Activated naive CD4-positive, alpha-beta T cell treated with anti-CD3 and anti-CD28 coated beads for 36 hours (primary cell): ENCODE measurements at regions of chr3 and their contacts with region 1.

Region 1: DNA sequence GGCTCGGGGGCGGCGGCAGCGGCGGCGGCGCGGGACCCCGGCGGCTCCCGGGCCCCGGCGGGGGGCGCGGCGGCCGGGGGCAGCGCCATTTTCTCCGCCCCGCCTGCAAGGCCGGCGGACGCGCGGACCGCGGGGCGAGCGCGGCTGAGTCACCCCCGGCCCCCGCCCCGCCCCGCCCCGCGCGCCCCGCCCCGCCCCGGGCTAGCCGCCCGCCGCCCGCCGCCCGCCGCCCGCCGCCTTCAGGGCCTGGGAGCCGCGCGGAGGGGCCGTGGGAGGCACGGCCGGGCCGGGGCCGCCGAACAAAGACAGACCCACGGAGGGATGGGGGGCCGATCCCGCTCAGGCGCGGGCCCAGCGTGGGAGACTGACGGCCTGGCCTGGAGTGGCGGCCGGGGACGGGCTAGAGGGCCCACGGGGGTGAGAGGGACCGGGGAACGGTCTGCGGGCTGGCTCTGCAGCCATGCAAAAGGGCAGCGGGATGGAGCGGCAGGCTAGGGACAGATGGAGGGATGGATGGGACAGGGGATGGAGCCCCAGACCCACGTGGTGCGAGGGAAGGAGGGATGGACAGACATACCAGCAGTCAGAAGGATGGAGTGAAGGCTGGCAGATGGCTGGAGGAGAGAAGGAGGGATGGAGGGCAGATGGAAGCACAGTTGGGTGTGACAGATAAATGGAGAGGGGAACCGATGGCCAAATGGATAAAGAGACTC is at the start of gene EIF4E3:
- DNase-seq: peak; percentile 31
- H3K4me3 Mint-ChIP-seq: peak within 1 kb of the TSS; percentile 90
- H3K27ac Mint-ChIP-seq: peak within 1 kb of the TSS; percentile 91
- H3K4me1 Mint-ChIP-seq: peaks cover 59% of the 10 kb centered on the region
- H3K27me3 Mint-ChIP-seq: no peaks in the 10 kb centered on the region
- total RNA-seq, gene EIF4E3: 25.2 to 26.2 TPM

Region 2: DNA sequence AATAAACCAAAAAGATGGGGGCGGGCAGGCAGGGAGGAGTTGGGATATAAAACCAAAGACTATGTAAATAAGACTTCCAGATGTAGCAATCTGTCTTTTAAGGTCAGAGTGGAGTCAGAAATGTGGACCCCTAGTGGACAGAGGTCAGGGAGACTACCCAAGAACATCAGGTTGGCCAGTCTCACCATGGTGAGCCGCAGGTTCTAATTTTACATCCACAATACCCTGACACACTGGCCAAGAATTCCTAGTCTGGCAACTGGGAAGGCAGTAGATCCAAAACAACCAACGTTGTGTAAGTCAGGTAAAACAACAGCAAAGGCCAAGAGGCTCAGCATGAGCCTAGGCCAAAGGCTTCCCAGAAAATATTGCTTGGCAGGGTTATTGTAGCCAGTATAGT is 345.3 kb before region 1 on chr3:
- CTCF ChIA-PET with region 1: no interaction called
- intact Hi-C with region 1: loop called (anchors 5 kb)
- DNase-seq: no peak
- H3K4me3 Mint-ChIP-seq: no peak overlapping the region
- H3K27ac Mint-ChIP-seq: peak overlapping the region; percentile 69
- H3K4me1 Mint-ChIP-seq: peaks cover 88% of the 10 kb centered on the region
- H3K27me3 Mint-ChIP-seq: no peaks in the 10 kb centered on the region

Region 3: GRCh38 chr3:71520161-71521020 is 205.0 kb before region 1 on chr3:
- CTCF ChIA-PET with region 1: no interaction called
- intact Hi-C with region 1: no loop called
- DNase-seq: no peak
- H3K4me3 Mint-ChIP-seq: no peak overlapping the region
- H3K27ac Mint-ChIP-seq: no peak overlapping the region
- H3K4me1 Mint-ChIP-seq: peaks cover 9% of the 10 kb centered on the region
- H3K27me3 Mint-ChIP-seq: no peaks in the 10 kb centered on the region

Region 4: DNA sequence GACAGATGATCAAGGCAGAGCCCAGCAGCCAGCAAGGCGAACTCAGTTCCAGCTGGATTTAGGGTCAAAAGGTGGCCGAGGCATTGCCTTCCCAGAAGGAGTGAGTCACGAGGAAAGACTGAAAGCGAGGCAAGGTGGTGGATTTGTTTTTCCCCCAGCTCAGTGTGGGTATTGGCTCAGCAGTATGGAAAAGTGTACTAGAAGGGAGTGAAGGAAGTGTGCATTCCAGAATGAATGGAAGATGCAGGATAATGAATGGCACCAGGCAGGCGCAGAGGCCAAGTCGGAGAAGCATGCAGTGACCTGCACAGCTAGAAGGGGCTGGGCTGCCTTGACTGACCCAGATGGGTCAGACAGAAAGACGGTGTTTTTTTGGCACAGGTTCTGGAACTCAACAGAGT is 188.2 kb before region 1 on chr3:
- CTCF ChIA-PET with region 1: no interaction called
- intact Hi-C with region 1: no loop called
- DNase-seq: no peak
- H3K4me3 Mint-ChIP-seq: no peak overlapping the region
- H3K27ac Mint-ChIP-seq: no peak overlapping the region
- H3K4me1 Mint-ChIP-seq: peaks cover 13% of the 10 kb centered on the region
- H3K27me3 Mint-ChIP-seq: peaks cover 3% of the 10 kb centered on the region

Region 5: DNA sequence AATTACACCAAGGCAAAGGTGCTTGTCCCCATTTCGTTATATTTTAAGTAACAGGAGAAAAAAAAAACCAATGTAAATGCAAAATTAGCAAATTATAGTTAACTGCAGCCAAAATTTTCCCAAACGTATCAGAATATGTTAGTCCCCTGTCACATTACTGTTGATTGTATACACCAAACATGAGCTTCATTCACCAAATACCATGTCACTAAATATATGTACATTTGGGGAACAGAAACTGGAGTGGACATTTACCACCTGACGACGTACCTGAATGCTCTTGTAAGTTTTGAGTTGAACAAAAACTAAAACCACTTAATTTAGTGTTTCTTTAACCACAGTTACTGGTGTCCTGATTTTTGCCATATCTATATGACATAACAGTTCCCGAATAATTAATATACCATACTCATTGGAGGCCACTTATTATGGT is 138.6 kb before region 1 on chr3:
- CTCF ChIA-PET with region 1: no interaction called
- intact Hi-C with region 1: no loop called
- DNase-seq: no peak
- H3K4me3 Mint-ChIP-seq: no peak overlapping the region
- H3K27ac Mint-ChIP-seq: no peak overlapping the region
- H3K4me1 Mint-ChIP-seq: peaks cover 30% of the 10 kb centered on the region
- H3K27me3 Mint-ChIP-seq: no peaks in the 10 kb centered on the region

Region 6: DNA sequence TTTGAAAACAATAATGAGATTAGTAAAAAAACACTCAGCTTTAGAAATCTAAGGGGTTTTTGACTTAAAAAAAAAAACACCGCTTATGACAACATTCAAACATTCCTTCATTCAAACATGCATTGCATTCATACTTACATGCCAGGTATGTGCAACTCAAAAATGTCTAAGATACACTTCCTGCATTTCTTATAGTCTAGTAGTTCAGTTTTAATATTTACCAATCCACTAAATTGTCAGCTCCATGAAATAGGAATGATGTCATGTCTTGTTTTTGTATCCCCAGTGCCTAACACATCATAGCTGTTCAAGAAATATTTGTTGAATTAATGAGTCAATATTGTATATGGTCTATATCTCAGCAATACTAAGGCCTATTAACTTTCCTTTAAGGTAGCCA is 51.9 kb before region 1 on chr3:
- CTCF ChIA-PET with region 1: no interaction called
- intact Hi-C with region 1: no loop called
- DNase-seq: no peak
- H3K4me3 Mint-ChIP-seq: no peak overlapping the region
- H3K27ac Mint-ChIP-seq: no peak overlapping the region
- H3K4me1 Mint-ChIP-seq: no peaks in the 10 kb centered on the region
- H3K27me3 Mint-ChIP-seq: no peaks in the 10 kb centered on the region

Region 7: GRCh38 chr3:71742621-71743020 is 17.2 kb after region 1 on chr3:
- CTCF ChIA-PET with region 1: interaction called, 11 read pairs
- intact Hi-C with region 1: no loop called
- DNase-seq: no peak
- H3K4me3 Mint-ChIP-seq: no peak overlapping the region
- H3K27ac Mint-ChIP-seq: no peak overlapping the region
- H3K4me1 Mint-ChIP-seq: no peaks in the 10 kb centered on the region
- H3K27me3 Mint-ChIP-seq: peaks cover 2% of the 10 kb centered on the region

Region 8: DNA sequence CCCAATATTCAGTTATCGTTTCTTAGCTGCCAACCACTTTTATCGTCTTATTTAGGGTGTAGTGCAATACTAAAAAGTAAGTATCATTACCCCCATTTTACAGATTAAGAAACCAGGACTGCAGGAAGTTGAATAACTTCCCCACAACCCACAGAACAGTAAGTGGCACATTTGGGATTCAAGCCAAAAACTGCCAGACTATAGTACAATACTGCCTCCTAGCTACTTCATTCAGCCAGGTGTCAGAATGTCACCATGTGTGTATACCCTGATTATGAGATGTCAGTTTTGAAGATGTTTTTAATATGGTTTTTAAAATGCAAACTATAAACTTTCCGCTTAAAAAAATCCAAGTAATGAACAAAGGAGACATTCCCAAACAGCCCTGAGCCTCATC is 133.7 kb after region 1 on chr3:
- CTCF ChIA-PET with region 1: interaction called, 37 read pairs
- intact Hi-C with region 1: loop called (anchors 1 kb)
- DNase-seq: peak; percentile 38
- H3K4me3 Mint-ChIP-seq: no peak overlapping the region
- H3K27ac Mint-ChIP-seq: no peak overlapping the region
- H3K4me1 Mint-ChIP-seq: peaks cover 3% of the 10 kb centered on the region
- H3K27me3 Mint-ChIP-seq: peaks cover 9% of the 10 kb centered on the region

Region 9: GRCh38 chr3:72134989-72135451 is 409.6 kb after region 1 on chr3:
- CTCF ChIA-PET with region 1: interaction called, 3 read pairs
- intact Hi-C with region 1: loop called (anchors 5 kb)
- DNase-seq: peak; percentile 18
- H3K4me3 Mint-ChIP-seq: peak overlapping the region; percentile 49
- H3K27ac Mint-ChIP-seq: peak overlapping the region; percentile 78
- H3K4me1 Mint-ChIP-seq: peaks cover 47% of the 10 kb centered on the region
- H3K27me3 Mint-ChIP-seq: peaks cover 4% of the 10 kb centered on the region

Region 10: DNA sequence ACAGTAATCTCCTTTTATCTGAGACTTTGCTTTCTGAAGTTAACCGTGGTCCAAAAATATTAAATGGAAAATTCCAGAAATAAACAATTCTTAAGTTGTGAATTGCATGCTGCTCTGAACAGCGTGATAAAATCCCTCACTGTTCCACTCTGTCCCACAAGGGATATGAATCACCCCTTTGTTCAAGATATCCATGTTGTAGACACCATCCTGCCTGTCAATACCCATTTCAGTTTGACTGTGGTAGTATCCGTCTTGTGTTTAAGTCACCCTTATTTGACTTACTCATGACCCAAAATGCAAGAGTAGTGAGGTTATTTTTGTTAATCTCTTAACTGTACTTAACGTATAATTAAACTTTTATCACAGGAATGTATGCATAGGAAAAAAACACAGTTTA is 687.8 kb after region 1 on chr3:
- CTCF ChIA-PET with region 1: no interaction called
- intact Hi-C with region 1: loop called (anchors 10 kb)
- DNase-seq: no peak
- H3K4me3 Mint-ChIP-seq: no peak overlapping the region
- H3K27ac Mint-ChIP-seq: no peak overlapping the region
- H3K4me1 Mint-ChIP-seq: peaks cover 80% of the 10 kb centered on the region
- H3K27me3 Mint-ChIP-seq: no peaks in the 10 kb centered on the region

Region 11: DNA sequence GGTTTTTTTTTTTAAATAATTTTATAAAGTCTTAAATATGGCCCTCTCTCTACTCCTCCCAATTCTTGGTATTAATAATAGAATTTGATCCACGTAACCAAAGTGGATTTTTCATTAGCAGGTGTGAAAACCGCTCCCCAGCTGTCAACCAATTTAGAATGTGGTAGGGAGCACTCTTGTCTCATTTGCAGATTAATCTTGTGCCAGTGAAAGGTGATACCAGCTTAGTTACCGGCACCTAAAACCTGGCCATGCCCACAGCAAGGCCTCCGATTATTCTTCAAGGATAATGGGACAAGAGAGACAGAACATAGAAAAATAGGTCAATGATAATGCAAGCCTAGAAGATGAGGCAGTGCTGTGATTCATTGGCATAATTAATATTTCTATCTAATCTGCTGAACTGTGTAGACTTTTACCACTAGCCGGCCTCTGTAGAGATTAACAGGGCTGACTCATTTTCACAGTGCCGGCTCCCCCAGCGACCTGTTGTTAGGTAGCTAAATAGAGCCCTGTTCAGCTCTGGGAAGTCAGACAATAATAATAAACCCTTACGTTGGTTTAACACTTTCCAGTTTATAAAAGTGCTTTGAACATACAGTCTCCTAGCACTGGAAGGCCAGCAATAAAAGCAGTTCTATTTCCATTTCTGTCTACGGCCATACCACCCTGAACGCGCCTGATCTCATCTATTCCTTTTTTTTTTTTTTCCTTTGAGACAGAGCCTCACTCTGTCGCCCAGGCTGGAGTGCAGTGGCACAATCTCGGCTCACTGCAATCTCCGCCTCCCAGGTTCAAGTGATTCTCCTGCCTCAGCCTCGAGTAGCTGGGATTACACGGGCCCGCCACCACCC is 1019.9 kb after region 1 on chr3:
- CTCF ChIA-PET with region 1: no interaction called
- intact Hi-C with region 1: loop called (anchors 10 kb)
- DNase-seq: no peak
- H3K4me3 Mint-ChIP-seq: no peak overlapping the region
- H3K27ac Mint-ChIP-seq: no peak overlapping the region
- H3K4me1 Mint-ChIP-seq: peaks cover 36% of the 10 kb centered on the region
- H3K27me3 Mint-ChIP-seq: no peaks in the 10 kb centered on the region